ENCODE measurements at regions of chr7 and their contacts with region 1.

Region 1: GRCh38 chr7:36264123-36264801 is 111.2 kb downstream of the EEPD1 start:
- DNase-seq: no peak
- H3K4me3 ChIP-seq: no peak overlapping the region
- H3K27ac ChIP-seq: no peak overlapping the region
- H3K4me1 ChIP-seq: no peaks in the 10 kb centered on the region
- H3K27me3 ChIP-seq: no peaks in the 10 kb centered on the region
- CTCF ChIP-seq: no peak

Region 2: GRCh38 chr7:36250317-36250716 is 13.9 kb before region 1 on chr7:
- CTCF ChIA-PET with region 1: interaction called, 10 read pairs
- POLR2A ChIA-PET with region 1: no interaction called
- intact Hi-C with region 1: no loop called
- DNase-seq: no peak
- H3K4me3 ChIP-seq: no peak overlapping the region
- H3K27ac ChIP-seq: no peak overlapping the region
- H3K4me1 ChIP-seq: no peaks in the 10 kb centered on the region
- H3K27me3 ChIP-seq: no peaks in the 10 kb centered on the region
- CTCF ChIP-seq: no peak

Region 3: DNA sequence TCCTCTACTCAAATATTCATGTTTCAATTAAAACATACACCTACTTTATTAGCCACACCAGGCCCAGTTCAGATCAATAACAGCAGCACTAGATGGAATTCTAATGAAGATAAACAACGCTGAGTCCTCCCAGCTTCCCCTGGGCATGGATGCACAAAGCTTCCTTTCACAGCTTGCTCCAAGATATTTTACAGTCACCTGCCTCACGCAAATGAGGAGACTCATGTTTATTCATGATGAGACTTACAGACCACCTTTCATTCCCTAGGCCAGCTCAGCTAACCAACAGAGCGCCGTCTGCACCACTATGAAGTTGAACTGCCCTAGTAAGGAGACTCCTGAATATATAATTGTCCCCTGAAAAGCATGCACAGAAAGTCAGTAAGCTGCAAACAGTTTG is 743.0 kb after region 1 on chr7:
- CTCF ChIA-PET with region 1: no interaction called
- POLR2A ChIA-PET with region 1: no interaction called
- intact Hi-C with region 1: no loop called
- DNase-seq: no peak
- H3K4me3 ChIP-seq: no peak overlapping the region
- H3K27ac ChIP-seq: no peak overlapping the region
- H3K4me1 ChIP-seq: no peaks in the 10 kb centered on the region
- H3K27me3 ChIP-seq: peaks cover under 1% of the 10 kb centered on the region
- CTCF ChIP-seq: no peak

Measured in A673 (cell line).